ENCODE measurements at regions of chr14 and their contacts with region 1.

Region 1: DNA sequence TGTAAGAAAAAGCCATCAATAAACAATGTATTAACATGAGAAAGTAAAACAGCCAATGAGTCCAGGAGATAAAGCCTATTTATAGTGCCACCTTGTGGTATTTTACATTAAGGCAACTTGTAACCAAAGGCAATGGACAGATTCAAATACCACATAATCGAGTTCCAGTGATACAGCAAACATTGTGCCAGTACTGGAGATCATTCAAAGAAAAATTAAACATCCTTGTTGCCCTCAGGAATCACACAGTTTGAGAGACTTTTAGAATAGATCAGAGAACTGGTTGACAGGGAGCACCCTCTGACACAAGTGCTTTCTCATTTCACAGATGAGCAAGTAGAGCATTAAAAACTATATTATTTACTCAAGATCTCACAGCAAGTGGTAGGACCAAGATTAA is 98.1 kb downstream of the DDHD1 start:
- DNase-seq: no peak
- H3K4me3 Mint-ChIP-seq: no peak overlapping the region
- H3K27ac Mint-ChIP-seq: no peak overlapping the region
- H3K4me1 Mint-ChIP-seq: no peaks in the 10 kb centered on the region
- H3K27me3 Mint-ChIP-seq: no peaks in the 10 kb centered on the region
- CTCF ChIP-seq: no peak

Region 2: GRCh38 chr14:53144244-53144643 is 89.2 kb after region 1 on chr14:
- CTCF ChIA-PET with region 1: no interaction called
- intact Hi-C with region 1: no loop called
- DNase-seq: no peak
- H3K4me3 Mint-ChIP-seq: no peak overlapping the region
- H3K27ac Mint-ChIP-seq: no peak overlapping the region
- H3K4me1 Mint-ChIP-seq: no peaks in the 10 kb centered on the region
- H3K27me3 Mint-ChIP-seq: no peaks in the 10 kb centered on the region
- CTCF ChIP-seq: no peak

Region 3: DNA sequence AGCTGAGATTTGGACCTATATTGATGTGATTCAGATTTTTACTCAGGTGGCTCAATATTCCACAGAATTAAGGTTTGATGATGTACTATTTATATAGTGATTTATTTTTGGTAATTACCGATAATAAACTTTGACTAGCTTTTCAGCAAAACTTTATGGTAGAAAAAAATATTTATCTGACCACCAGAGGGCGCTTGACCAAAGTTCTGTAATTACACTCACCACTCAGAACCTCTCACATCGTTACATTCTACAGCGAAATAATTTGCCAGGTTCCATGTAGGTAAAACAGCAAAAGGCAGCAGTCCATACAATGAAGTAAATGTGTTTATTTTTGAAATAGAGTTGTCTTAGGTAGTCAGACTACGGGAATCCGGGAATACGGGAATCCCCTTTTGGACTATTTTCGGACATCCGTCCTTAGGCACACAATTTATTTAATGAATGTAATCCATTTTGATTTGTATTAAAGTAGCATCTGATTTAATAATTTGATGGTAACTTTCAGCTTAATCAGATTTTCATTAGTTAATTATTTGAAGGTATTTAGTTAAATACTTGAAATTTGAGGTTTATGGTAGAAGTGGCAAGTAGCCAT is 241.1 kb after region 1 on chr14:
- CTCF ChIA-PET with region 1: no interaction called
- intact Hi-C with region 1: loop called (anchors 10 kb)
- DNase-seq: peak; percentile 38
- H3K4me3 Mint-ChIP-seq: no peak overlapping the region
- H3K27ac Mint-ChIP-seq: no peak overlapping the region
- H3K4me1 Mint-ChIP-seq: no peaks in the 10 kb centered on the region
- H3K27me3 Mint-ChIP-seq: peaks cover 9% of the 10 kb centered on the region
- CTCF ChIP-seq: peak; percentile 32

Measured in Calu3 (cell line).